Dendritic cell treated with granulocyte-macrophage colony-stimulating factor and Interleukin-4, amounts not matched to agents 40 ng/mL and 50 ng/mL, for 4 days (primary cell): ENCODE measurements at regions of chr13 and their contacts with region 1.

Region 1: GRCh38 chr13:20160847-20161274 is at the start of gene GJA3:
- H3K4me3 Mint-ChIP-seq: peak within 1 kb of the TSS; percentile 74
- H3K27ac Mint-ChIP-seq: no peak within 1 kb of the TSS
- H3K4me1 Mint-ChIP-seq: peaks cover 9% of the 10 kb centered on the region
- H3K27me3 Mint-ChIP-seq: peaks cover 64% of the 10 kb centered on the region

Region 2: GRCh38 chr13:19782049-19782726 is 378.7 kb before region 1 on chr13:
- intact Hi-C with region 1: loop called (anchors 5 kb)
- H3K4me3 Mint-ChIP-seq: peak overlapping the region; percentile 95
- H3K27ac Mint-ChIP-seq: peak overlapping the region; percentile 96
- H3K4me1 Mint-ChIP-seq: peaks cover 10% of the 10 kb centered on the region
- H3K27me3 Mint-ChIP-seq: no peaks in the 10 kb centered on the region

Region 3: GRCh38 chr13:19927117-19927748 is 233.6 kb before region 1 on chr13:
- intact Hi-C with region 1: loop called (anchors 2 kb)
- H3K4me3 Mint-ChIP-seq: no peak overlapping the region
- H3K27ac Mint-ChIP-seq: no peak overlapping the region
- H3K4me1 Mint-ChIP-seq: no peaks in the 10 kb centered on the region
- H3K27me3 Mint-ChIP-seq: no peaks in the 10 kb centered on the region

Region 4: DNA sequence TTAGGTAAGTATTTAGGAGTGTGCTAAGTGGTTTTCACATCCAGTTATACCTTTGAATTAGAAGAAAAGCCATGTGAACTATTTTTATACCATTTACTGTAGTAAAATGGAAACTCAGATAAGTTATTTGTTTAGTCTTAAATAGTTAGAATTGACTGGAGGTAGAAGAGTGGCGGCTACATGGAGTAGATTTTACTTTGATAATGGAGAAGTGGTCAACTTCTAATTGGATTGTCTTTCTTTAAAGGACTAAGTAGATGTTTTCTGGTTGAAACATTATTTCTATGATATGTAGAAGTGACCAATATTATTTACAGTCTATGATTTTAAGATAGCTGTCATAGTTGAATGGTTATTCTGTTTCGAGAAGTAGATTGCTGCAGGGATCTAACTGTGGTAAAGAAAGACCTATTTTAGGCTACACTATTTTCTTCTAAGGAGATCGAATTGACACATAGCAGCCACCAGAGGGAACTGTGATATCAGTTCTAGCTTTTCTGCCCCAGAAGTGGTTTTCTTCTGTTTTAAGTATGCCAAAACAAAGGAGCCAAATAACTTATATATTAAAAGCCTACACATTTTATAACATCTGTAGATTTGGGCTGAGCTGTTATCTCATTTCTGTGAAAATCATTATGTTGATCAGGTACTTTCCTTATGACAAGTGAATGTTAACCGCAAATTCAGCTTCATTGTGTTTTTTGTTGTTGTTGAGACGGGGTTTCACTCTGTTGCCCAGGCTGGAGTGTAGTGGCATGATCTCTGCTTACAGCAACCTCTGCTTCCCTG is 176.2 kb before region 1 on chr13:
- intact Hi-C with region 1: loop called (anchors 5 kb)
- H3K4me3 Mint-ChIP-seq: no peak overlapping the region
- H3K27ac Mint-ChIP-seq: no peak overlapping the region
- H3K4me1 Mint-ChIP-seq: peaks cover 29% of the 10 kb centered on the region
- H3K27me3 Mint-ChIP-seq: no peaks in the 10 kb centered on the region

Region 5: GRCh38 chr13:20057963-20058362 is 102.9 kb before region 1 on chr13:
- intact Hi-C with region 1: loop called (anchors 2 kb)
- H3K4me3 Mint-ChIP-seq: no peak overlapping the region
- H3K27ac Mint-ChIP-seq: no peak overlapping the region
- H3K4me1 Mint-ChIP-seq: no peaks in the 10 kb centered on the region
- H3K27me3 Mint-ChIP-seq: no peaks in the 10 kb centered on the region

Region 6: GRCh38 chr13:20090349-20090748 is 70.5 kb before region 1 on chr13:
- intact Hi-C with region 1: loop called (anchors 1 kb)
- H3K4me3 Mint-ChIP-seq: no peak overlapping the region
- H3K27ac Mint-ChIP-seq: no peak overlapping the region
- H3K4me1 Mint-ChIP-seq: no peaks in the 10 kb centered on the region
- H3K27me3 Mint-ChIP-seq: peaks cover 2% of the 10 kb centered on the region

Region 7: DNA sequence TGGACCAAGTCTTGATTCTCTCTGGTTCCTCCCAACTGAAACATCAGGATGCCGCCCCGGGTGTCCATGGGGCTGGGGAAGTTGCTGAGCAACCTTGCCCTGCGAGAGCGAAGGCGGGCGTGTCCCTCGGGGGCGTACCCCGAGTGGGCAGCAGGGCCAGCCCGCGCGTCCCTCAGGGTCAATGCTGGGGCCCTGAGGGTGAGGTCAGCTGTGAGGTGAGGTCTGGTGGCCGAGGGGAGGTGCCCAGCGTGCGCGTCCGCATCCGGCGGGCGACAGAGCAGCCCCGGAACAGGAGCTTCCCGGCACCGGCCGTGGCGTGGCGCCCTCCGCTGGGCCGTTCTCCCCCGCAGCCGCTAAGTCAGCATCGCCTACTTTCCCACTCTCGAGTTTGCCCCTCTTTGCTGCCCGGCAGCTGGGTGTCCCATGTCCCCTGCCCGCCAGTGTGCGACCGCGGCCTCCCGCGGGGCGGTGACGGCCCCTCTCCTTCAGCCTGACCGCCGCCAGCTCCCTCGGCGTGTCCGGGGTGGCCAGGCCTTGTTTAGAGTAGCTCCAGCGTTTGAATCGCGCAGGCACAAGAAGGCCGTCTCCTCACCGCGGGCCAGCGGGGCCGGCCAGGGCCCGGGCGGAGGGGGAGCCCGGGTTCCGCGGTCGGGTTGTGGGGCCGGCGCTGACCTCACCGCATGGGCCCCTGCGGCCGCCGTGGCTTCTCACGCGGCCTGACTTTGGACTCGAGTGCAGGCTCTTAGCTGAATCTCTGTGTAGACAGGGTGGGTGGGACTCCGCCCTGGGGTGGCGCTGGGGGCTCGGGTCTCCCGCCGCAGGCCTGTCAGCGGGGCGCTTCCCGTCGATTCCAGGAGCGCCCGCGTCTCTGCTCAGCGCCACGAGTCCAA is 33.0 kb before region 1 on chr13:
- intact Hi-C with region 1: loop called (anchors 5 kb)
- H3K4me3 Mint-ChIP-seq: peak overlapping the region; percentile 78
- H3K27ac Mint-ChIP-seq: peak overlapping the region; percentile 68
- H3K4me1 Mint-ChIP-seq: peaks cover 11% of the 10 kb centered on the region
- H3K27me3 Mint-ChIP-seq: peaks cover 19% of the 10 kb centered on the region